Activated B cell treated with CpG ODN at 0.5 μM for 24 hours (primary cell): ENCODE measurements at regions of chr12 and their contacts with region 1.

Region 1: GRCh38 chr12:121190523-121191031 is 19.4 kb upstream of the P2RX4 start:
- DNase-seq: no peak
- ATAC-seq: peak; percentile 68
- H3K4me3 Mint-ChIP-seq: no peak overlapping the region
- H3K27ac Mint-ChIP-seq: no peak overlapping the region
- H3K4me1 Mint-ChIP-seq: peaks cover 14% of the 10 kb centered on the region
- H3K27me3 Mint-ChIP-seq: no peaks in the 10 kb centered on the region
- CTCF ChIP-seq: no peak

Region 2: DNA sequence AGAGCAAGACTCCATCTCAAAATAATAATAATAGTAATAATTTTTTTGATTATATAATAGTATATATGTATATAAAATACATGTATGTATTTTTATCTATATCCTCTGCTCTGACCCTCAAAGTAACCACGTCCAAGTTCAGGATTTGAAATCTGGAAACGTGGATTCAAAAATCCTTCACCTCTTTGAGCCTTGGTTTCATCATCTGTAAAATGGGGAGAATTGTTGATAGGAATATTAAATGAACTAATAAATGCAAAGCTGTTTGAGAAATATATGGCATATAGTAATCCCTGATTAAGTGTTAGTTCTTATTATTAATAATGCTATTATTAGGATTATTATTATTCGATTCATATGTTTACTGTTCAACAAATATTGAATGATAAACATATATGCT is 55.3 kb before region 1 on chr12:
- CTCF ChIA-PET with region 1: no interaction called
- POLR2A ChIA-PET with region 1: interaction called, 12 read pairs
- intact Hi-C with region 1: no loop called
- DNase-seq: no peak
- ATAC-seq: no peak
- H3K4me3 Mint-ChIP-seq: no peak overlapping the region
- H3K27ac Mint-ChIP-seq: no peak overlapping the region
- H3K4me1 Mint-ChIP-seq: peaks cover 41% of the 10 kb centered on the region
- H3K27me3 Mint-ChIP-seq: no peaks in the 10 kb centered on the region
- CTCF ChIP-seq: no peak